Motor neuron (in vitro differentiated cells): ENCODE measurements at regions of chr17 and their contacts with region 1.

Region 1: GRCh38 chr17:10646392-10646990 is 10.6 kb downstream of the MYH3 start:
- ATAC-seq: peak; percentile 65 to 96 (median 78)
- H3K4me3 ChIP-seq: no peak overlapping the region
- H3K27ac ChIP-seq: no peak overlapping the region
- H3K4me1 ChIP-seq: peaks cover 0 to 3% of the 10 kb centered on the region in 2 donors

Region 2: DNA sequence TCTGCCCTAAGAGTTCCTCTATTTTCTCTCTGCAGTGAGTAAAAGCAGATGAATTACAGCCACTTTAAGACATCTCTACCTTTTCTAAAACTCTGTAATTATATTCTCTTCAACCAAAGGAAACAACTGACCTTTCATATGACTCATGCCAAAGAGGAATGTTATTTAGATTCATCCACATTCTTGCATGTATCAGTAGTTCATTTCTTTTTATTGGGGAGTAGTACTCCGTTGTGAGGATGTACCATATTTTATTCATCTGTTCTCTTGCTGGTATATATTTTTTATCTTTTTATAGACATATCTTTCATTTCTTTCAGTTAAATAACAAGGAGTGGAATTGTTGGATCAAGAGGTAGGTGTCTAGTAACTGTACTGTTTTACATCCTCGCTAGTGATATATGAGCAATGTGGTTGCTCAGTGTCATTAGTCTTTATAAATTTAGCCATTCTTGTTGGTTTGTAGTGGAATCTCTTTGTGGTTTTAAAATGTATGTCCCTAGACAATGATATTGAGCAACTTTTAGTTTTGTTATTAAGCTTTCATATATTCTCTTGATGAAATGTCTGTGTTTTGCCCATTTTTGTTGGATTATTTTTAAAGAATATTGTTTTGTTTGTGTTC is 217.0 kb before region 1 on chr17:
- in situ Hi-C with region 1: no loop called
- ATAC-seq: peak in 2 of 8 experiments; percentile 79 to 88
- H3K4me3 ChIP-seq: no peak overlapping the region
- H3K27ac ChIP-seq: no peak overlapping the region
- H3K4me1 ChIP-seq: no peaks in the 10 kb centered on the region

Region 3: GRCh38 chr17:10790491-10791401 is 144.3 kb after region 1 on chr17:
- in situ Hi-C with region 1: loop called in 1 of 9 experiments (anchors 25 kb)
- ATAC-seq: peak in 6 of 8 experiments; percentile 35 to 62 (median 50)
- H3K4me3 ChIP-seq: no peak overlapping the region
- H3K27ac ChIP-seq: no peak overlapping the region
- H3K4me1 ChIP-seq: peaks cover 0 to 7% of the 10 kb centered on the region in 2 donors

Region 4: GRCh38 chr17:10857976-10858375 is 211.5 kb after region 1 on chr17:
- in situ Hi-C with region 1: loop called in 2 of 9 experiments (anchors 10 to 25 kb)
- ATAC-seq: no peak
- H3K4me3 ChIP-seq: no peak overlapping the region
- H3K27ac ChIP-seq: no peak overlapping the region
- H3K4me1 ChIP-seq: no peaks in the 10 kb centered on the region

Region 5: GRCh38 chr17:11144358-11145233 is 498.1 kb after region 1 on chr17:
- in situ Hi-C with region 1: loop called in 2 of 9 experiments (anchors 25 kb)
- ATAC-seq: peak in 4 of 8 experiments; percentile 30 to 87 (median 84)
- H3K4me3 ChIP-seq: no peak overlapping the region
- H3K27ac ChIP-seq: no peak overlapping the region
- H3K4me1 ChIP-seq: no peaks in the 10 kb centered on the region